ENCODE measurements at regions of chr4 and their contacts with region 1.

Region 1: DNA sequence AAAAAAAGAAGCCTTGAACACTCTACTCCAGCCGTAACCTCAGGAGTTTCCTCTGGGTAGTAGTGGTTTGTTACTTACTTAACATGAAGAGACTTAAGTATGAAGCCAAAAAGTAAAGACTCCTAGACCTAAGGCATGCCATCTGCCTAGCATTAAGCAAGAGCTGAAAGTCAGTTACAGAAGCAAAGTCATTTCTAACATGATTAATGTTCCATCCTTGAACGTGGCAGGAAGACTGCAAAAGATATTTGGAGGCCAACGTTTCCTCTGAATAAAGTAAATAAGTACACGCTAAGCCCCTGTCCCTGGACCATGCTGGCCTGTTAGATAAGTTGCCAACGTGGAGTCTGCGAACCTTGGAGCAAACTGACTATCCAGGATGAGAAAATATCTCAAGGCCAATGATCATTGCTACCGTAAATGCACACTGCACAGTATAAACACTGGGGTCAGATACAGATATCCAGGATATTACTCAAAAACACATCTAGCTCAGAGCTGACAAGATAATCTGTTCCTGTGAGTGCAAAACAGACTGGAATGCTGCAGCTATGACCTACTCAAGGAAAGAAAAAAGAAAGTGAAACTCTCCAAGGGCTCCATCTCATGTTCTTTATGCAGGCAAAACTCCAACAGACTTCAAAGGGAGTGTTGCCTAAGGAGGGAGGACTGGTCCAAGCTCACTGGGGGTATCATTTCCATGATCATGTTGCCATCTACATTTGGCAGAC is 255.8 kb downstream of the COL25A1 start:
- DNase-seq: peak; percentile 53
- H3K4me3 ChIP-seq: no peak overlapping the region
- H3K27ac ChIP-seq: no peak overlapping the region
- H3K4me1 ChIP-seq: peaks cover 2% of the 10 kb centered on the region
- H3K27me3 ChIP-seq: no peaks in the 10 kb centered on the region
- CTCF ChIP-seq: no peak
- POLR2A ChIP-seq: no peak

Region 2: DNA sequence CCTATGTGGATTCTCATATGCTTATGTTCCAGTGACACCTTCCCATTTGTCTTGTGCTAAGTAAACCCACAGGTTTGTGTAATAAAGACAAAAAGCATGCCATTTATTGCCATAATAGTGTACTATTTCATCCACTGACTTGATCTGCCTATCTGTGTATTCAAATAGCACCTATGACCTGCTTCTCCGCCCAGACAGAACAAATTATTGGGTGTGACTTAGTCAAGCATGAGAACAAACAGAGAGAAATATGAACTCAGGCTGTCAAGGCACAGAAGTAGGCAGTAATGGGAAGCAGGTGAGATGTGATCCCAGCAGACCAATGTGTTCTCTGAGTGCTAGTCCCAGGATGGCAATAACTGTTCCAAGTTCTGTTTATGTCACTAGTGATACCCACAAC is 1126.3 kb after region 1 on chr4:
- CTCF ChIA-PET with region 1: no interaction called
- POLR2A ChIA-PET with region 1: no interaction called
- dilution Hi-C with region 1: no loop called
- intact Hi-C with region 1: loop called (anchors 5 kb)
- DNase-seq: no peak
- H3K4me3 ChIP-seq: no peak overlapping the region
- H3K27ac ChIP-seq: no peak overlapping the region
- H3K4me1 ChIP-seq: no peaks in the 10 kb centered on the region
- H3K27me3 ChIP-seq: no peaks in the 10 kb centered on the region
- CTCF ChIP-seq: no peak
- POLR2A ChIP-seq: no peak

Measured in endothelial cell of umbilical vein (primary cell).